GM12878 (cell line): ENCODE measurements at regions of chr12 and their contacts with region 1.

Region 1: DNA sequence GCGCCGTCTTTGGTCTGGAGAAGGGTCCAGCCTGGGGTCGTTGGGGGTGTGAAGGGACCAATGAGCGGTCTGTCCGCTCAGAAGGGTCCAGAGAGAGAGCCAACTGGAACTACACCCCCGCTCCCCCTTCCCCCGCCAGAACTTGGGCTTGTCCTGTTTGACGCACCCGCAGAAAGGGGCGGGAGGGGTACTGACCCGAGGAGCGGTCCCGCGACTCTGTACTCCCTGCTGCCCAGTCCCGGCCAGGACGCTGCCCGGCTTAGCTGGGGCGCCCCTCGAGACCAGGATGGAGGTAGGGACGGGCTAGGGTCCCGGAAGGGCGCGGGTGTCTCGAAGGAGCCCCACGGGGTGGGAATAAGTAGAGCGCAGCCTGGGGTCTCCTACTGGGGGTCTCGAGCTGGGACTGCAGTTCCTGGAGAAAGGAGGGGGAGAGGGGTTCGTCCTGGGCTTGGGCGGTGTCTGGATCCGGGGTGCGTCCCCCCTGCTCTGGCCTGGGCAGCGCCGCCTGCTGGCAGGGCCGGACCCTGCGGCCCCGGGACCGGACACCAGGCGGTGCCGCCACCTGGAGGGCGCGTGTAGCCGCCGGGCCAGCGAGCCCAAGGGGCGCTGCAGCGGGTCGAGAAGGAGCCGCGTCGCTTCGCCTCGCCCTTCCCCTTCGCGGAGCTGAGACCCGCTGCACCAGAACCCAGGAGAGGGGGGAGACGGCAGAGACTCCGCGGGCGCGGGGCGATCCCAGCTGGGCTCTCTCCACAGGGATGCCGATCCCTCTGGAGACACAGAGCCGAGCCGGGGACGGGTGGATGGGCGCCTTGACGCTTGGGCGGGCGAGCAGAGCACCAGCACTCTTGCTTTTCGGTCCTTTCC is 3.8 kb upstream of the CACNB3 start:
- DNase-seq: peak; percentile 31
- ATAC-seq: peak; percentile 92
- H3K4me3 ChIP-seq: peak overlapping the region; percentile 66
- H3K27ac ChIP-seq: no peak overlapping the region
- H3K4me1 ChIP-seq: peaks cover 7% of the 10 kb centered on the region
- H3K27me3 ChIP-seq: peaks cover 1 to 3% of the 10 kb centered on the region in 2 experiments; a peak in 3 of 4 replicates
- CTCF ChIP-seq: peak; percentile 96 to 100 (median 100); a peak in 5 of 6 replicates
- EP300 ChIP-seq: no peak
- POLR2A ChIP-seq: peak; percentile 75
- RAD21 ChIP-seq: peak; percentile 27

Region 2: DNA sequence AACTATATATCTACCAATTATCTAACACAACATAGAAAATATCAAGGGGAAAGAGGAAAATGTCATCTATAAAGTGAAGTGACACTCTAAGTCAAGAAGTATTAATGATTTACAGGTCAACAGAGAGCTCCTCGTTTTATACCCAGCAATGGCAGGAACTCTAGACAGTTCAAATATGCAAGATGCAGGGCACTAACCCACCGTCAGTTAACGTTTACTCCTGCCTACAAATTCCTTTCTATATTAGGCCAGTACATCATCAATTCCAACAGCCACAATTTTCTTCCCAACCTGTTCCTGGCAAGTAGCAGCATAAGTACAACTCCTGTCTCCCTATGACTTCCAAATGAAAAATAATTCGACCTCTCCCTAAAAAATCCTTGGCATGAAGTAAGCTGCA is 123.5 kb before region 1 on chr12:
- CTCF ChIA-PET with region 1: no interaction called
- POLR2A ChIA-PET with region 1: no interaction called
- RAD21 ChIA-PET with region 1: no interaction called
- SMC1A ChIA-PET with region 1: no interaction called
- in situ Hi-C with region 1: no loop called
- intact Hi-C with region 1: no loop called
- DNase-seq: no peak
- ATAC-seq: no peak
- H3K4me3 ChIP-seq: no peak overlapping the region
- H3K27ac ChIP-seq: no peak overlapping the region
- H3K4me1 ChIP-seq: no peaks in the 10 kb centered on the region
- H3K27me3 ChIP-seq: no peaks in the 10 kb centered on the region
- CTCF ChIP-seq: no peak
- EP300 ChIP-seq: no peak
- POLR2A ChIP-seq: no peak
- RAD21 ChIP-seq: no peak

Region 3: DNA sequence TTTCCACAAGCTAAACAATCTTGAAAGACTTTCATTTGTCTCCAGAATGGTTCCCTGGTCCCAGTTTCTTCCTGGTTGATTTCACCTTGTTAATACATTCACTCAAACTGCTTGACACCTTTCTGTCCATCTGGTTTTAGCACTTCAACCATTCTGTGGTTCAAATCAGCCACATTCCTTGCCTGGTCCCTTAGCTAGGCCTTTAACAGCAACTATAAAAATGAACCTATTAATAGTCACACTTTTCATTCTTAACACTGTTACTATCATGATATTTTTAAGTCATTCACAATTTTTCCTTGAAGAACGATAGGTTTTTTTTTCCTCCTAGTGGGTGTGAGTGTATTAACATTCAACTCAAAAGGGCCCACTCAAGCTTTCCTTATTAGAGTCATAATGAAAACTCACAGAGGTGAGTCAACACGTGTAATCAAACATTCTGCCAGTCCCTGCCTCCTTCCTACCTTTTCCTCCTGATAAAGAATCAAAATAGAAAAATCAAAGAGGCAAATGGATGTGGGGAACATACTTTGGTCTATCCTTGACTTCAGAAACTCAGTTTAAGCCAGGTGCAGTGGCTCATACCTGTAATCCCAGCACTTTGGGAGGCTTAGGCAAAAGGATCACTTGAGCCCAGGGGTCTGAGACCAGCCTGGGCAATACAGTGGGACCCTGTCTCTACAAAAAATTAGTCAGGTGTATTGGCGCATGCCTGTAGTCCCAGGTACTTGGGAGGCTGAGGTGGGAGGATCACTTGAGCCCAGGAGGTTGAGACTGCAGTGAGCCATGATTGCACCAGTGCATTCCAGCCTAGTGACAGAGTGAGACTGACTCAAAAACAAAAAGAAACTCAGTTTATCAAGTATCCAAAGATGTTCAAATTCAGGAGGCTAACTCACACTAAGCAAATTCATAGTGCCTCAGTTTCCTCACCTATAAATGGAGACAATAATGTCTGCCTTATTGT is 63.4 kb before region 1 on chr12:
- CTCF ChIA-PET with region 1: interaction called, 45 read pairs
- POLR2A ChIA-PET with region 1: interaction called, 4 read pairs
- RAD21 ChIA-PET with region 1: interaction called, 10 read pairs
- SMC1A ChIA-PET with region 1: interaction called, 3 read pairs
- in situ Hi-C with region 1: no loop called
- intact Hi-C with region 1: no loop called
- DNase-seq: no peak
- ATAC-seq: no peak
- H3K4me3 ChIP-seq: no peak overlapping the region
- H3K27ac ChIP-seq: no peak overlapping the region
- H3K4me1 ChIP-seq: no peaks in the 10 kb centered on the region
- H3K27me3 ChIP-seq: no peaks in the 10 kb centered on the region; a peak in 1 of 4 replicates
- CTCF ChIP-seq: no peak
- EP300 ChIP-seq: no peak
- POLR2A ChIP-seq: no peak
- RAD21 ChIP-seq: no peak

Region 4: GRCh38 chr12:48758221-48758620 is 56.3 kb before region 1 on chr12:
- CTCF ChIA-PET with region 1: interaction called, 45 read pairs
- POLR2A ChIA-PET with region 1: interaction called, 4 read pairs
- RAD21 ChIA-PET with region 1: interaction called, 10 read pairs
- SMC1A ChIA-PET with region 1: no interaction called
- in situ Hi-C with region 1: no loop called
- intact Hi-C with region 1: no loop called
- DNase-seq: no peak
- ATAC-seq: no peak
- H3K4me3 ChIP-seq: no peak overlapping the region
- H3K27ac ChIP-seq: no peak overlapping the region
- H3K4me1 ChIP-seq: no peaks in the 10 kb centered on the region
- H3K27me3 ChIP-seq: no peaks in the 10 kb centered on the region
- CTCF ChIP-seq: no peak
- EP300 ChIP-seq: no peak
- POLR2A ChIP-seq: no peak
- RAD21 ChIP-seq: no peak

Region 5: DNA sequence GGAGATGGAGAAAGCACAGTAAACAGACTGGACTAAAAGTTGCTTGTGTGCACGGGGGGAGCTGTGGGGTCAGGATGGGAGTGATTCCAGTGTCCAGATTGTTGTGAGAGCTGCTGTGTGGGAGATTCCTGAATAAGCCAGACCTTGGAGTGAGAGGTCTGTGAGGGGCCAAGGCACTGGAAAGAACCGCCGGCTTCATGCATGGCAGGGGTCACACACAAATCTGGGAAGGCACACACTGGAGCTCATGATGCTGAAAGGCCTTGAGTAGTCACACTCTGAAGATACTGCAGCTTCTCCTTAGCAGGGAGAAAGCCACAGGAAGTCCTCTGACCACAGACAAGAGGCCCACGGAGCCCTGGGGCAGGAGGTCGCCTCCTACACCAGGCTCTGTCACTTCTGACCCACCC is 48.7 kb before region 1 on chr12:
- CTCF ChIA-PET with region 1: interaction called, 15 read pairs
- POLR2A ChIA-PET with region 1: no interaction called
- RAD21 ChIA-PET with region 1: no interaction called
- SMC1A ChIA-PET with region 1: no interaction called
- in situ Hi-C with region 1: no loop called
- intact Hi-C with region 1: no loop called
- DNase-seq: no peak
- ATAC-seq: peak; percentile 86
- H3K4me3 ChIP-seq: no peak overlapping the region
- H3K27ac ChIP-seq: no peak overlapping the region
- H3K4me1 ChIP-seq: peaks cover 18% of the 10 kb centered on the region
- H3K27me3 ChIP-seq: no peaks in the 10 kb centered on the region
- CTCF ChIP-seq: no peak
- EP300 ChIP-seq: no peak
- POLR2A ChIP-seq: no peak
- RAD21 ChIP-seq: no peak

Region 6: GRCh38 chr12:48788854-48789796 is 25.4 kb before region 1 on chr12 and contains the start of gene ADCY6:
- CTCF ChIA-PET with region 1: interaction called, 46 read pairs
- POLR2A ChIA-PET with region 1: interaction called, 5 read pairs
- RAD21 ChIA-PET with region 1: no interaction called
- SMC1A ChIA-PET with region 1: interaction called, 5 read pairs
- in situ Hi-C with region 1: no loop called
- intact Hi-C with region 1: no loop called
- DNase-seq: no peak
- ATAC-seq: peak; percentile 78
- H3K4me3 ChIP-seq: peak within 1 kb of the TSS; percentile 11; the same call in 1 of the 2 replicates
- H3K27ac ChIP-seq: no peak within 1 kb of the TSS
- H3K4me1 ChIP-seq: no peaks in the 10 kb centered on the region
- H3K27me3 ChIP-seq: no peaks in the 10 kb centered on the region
- CTCF ChIP-seq: no peak
- EP300 ChIP-seq: no peak
- POLR2A ChIP-seq: no peak
- RAD21 ChIP-seq: no peak
- polyA plus RNA-seq, gene ADCY6: 0.07 to 0.14 TPM

Region 7: DNA sequence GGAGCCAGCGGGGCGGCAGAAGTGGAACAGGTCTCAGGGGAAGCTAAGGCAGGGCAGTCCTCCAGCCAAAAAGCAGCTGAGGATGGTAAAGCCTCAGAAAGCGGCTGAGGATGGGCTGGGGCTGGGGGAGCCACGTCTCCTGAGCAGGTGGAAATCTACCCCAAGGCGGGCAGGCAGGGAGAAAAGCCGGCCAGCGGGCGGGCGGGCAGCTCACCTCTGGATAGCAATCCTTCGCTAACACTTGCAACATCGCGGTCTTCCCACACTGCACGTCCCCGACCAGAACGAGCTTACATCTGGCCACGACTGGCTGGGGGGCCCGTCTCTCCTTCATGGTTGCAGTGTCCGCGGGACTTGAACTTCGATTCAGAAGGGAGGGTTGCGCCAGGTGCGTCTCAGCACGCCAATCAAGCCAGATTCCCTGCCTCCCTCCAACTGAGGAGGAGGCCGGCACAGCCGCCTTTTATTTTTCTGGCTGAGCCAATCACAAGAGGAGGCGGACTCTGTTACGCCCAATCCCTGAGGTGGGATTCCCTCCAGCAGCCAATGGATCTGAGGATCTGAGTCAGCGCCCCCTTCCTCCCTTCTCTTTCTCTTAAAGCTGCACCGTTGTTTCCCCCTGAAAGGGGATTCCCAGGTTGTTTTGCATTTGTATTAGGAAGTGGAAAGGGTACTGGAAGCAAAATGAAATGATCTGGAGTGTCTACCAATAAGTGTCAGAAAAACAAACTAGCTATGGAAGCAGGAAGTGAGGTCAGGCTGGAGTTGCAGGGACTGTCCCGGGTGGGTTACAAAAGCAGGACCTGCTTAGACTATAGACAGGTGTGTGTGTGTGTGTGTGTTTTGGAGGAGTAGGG is 51.2 kb after region 1 on chr12 and contains the start of gene RND1:
- CTCF ChIA-PET with region 1: interaction called, 10 read pairs
- POLR2A ChIA-PET with region 1: interaction called, 13 read pairs
- RAD21 ChIA-PET with region 1: no interaction called
- SMC1A ChIA-PET with region 1: no interaction called
- in situ Hi-C with region 1: no loop called
- intact Hi-C with region 1: no loop called
- DNase-seq: peak; percentile 89
- ATAC-seq: peak; percentile 95
- H3K4me3 ChIP-seq: peak within 1 kb of the TSS; percentile 79
- H3K27ac ChIP-seq: peak within 1 kb of the TSS; percentile 49
- H3K4me1 ChIP-seq: peaks cover 12% of the 10 kb centered on the region
- H3K27me3 ChIP-seq: no peaks in the 10 kb centered on the region
- CTCF ChIP-seq: 0 out of 6 replicates have a peak, but pooled peaks of 1 of the 3 experiments have one; percentile 5
- EP300 ChIP-seq: no peak
- POLR2A ChIP-seq: peak; percentile 99
- RAD21 ChIP-seq: no peak
- polyA plus RNA-seq, gene RND1: 0.24 to 0.42 TPM

Region 8: GRCh38 chr12:49060237-49061156 is 246.0 kb after region 1 on chr12 and contains the start of gene KMT2D:
- CTCF ChIA-PET with region 1: no interaction called
- POLR2A ChIA-PET with region 1: no interaction called
- RAD21 ChIA-PET with region 1: no interaction called
- SMC1A ChIA-PET with region 1: no interaction called
- in situ Hi-C with region 1: no loop called
- intact Hi-C with region 1: no loop called
- DNase-seq: peak; percentile 59
- ATAC-seq: peak; percentile 78
- H3K4me3 ChIP-seq: peak within 1 kb of the TSS; percentile 99
- H3K27ac ChIP-seq: peak within 1 kb of the TSS; percentile 99
- H3K4me1 ChIP-seq: peaks cover 6% of the 10 kb centered on the region
- H3K27me3 ChIP-seq: no peaks in the 10 kb centered on the region
- CTCF ChIP-seq: peak in 1 of 3 experiments; percentile 28; a peak in 1 of 6 replicates
- EP300 ChIP-seq: peak in 1 of 2 experiments; percentile 66; a peak in 1 of 4 replicates
- POLR2A ChIP-seq: peak; percentile 80
- RAD21 ChIP-seq: no peak
- polyA plus RNA-seq, gene KMT2D: 0.51 to 1.2 TPM

Region 9: DNA sequence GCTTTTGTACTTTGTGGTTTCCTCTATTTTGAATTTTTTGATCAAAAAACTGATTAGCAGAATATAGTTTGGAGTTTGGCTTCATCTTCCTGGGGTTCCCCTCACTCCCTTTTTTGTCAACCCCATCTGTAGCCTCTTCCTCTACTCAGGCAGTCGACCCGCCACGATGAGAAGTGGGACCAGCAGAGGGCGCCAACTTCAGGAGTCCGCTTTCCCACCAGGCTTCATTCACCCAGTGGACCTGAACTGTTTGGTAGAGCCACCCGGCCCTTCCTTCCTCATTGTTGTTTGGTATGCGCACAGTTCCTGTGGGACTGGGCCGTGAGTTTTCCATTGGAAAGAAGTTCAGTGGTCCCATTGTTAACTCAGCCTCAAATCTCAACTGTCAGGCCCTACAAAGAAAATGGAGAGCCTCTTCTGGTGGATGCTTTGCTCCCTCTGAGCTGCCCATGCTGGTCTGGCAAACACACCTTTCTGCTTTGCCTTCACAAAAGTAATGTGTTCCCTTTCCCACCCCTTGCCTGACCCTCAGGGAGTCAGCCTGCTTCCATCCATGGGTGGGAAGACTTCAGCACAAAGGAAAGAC is 948.6 kb after region 1 on chr12:
- CTCF ChIA-PET with region 1: no interaction called
- POLR2A ChIA-PET with region 1: no interaction called
- RAD21 ChIA-PET with region 1: no interaction called
- SMC1A ChIA-PET with region 1: no interaction called
- in situ Hi-C with region 1: no loop called
- intact Hi-C with region 1: no loop called
- DNase-seq: no peak
- ATAC-seq: peak; percentile 85
- H3K4me3 ChIP-seq: no peak overlapping the region
- H3K27ac ChIP-seq: peak overlapping the region; percentile 30
- H3K4me1 ChIP-seq: peaks cover 26% of the 10 kb centered on the region
- H3K27me3 ChIP-seq: no peaks in the 10 kb centered on the region
- CTCF ChIP-seq: peak; percentile 59 to 88 (median 82)
- EP300 ChIP-seq: no peak
- POLR2A ChIP-seq: no peak
- RAD21 ChIP-seq: peak; percentile 47